KBM-7 (cell line): ENCODE measurements at regions of chr9 and their contacts with region 1.

Region 1: GRCh38 chr9:34591248-34591916 is 1.9 kb upstream of the CNTFR start:
- DNase-seq: peak; percentile 69

Region 2: DNA sequence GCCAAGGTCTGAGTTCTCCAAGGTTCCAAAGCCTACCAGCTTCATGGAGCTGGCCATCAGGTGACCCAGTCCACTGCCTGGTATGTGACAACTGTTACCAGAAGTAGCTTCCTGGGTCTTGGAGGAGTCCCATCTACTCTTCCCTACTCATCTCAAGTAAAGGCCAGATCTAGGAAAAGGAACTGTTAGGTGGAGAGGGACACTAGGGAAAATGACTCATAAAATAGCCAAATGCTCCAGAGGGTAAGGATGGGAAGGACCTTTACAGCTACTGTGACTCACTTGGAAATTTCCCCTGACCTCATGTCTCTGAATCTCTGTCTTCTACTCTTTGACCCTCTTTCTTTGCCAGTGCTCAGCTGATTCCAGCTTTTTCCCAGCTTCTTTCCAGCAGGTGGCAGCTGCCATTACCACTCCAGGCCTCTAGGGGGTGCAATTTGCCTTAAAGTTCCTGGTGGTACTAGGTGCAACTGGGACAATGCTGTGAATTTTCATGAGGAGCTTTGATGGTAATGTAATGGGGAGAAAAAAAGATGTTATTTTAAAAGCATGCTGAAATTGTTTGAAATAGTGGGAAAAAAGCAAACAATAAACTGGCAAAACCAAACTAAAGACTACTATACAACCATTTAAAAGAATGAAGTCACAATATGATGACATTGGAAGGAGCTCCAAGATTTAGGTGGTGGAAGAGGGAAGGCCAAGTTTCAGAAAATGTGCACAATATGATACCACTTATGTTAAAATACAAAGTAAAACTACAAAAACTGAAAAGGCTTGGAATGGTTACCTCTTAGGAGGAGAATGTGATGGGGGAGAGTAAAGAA is 187.6 kb before region 1 on chr9:
- in situ Hi-C with region 1: loop called (anchors 25 kb)
- DNase-seq: peak; percentile 62

Region 3: DNA sequence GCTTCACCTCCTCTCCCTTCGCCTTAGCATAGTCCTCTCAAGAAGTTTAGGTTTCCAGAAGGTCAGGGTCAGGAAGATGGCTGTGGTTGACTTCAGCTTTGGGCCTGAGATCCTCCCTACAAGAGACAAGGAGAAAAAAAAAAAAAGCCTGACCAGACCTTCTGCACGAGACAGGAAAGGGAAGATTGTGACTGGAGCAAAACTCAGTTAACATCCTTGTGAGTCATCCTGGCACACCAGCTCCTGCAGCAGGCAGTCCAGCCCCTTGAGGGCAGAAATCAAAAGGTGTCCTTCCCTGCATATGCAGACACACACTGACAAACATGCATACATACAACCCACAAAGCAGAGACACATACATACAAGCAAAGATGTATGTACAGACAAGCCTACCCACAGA is 50.6 kb before region 1 on chr9:
- in situ Hi-C with region 1: loop called (anchors 5 kb)
- DNase-seq: no peak